ENCODE measurements at regions of chr4 and their contacts with region 1.

Region 1: GRCh38 chr4:3399277-3400194 is 42.2 kb upstream of the HGFAC start:
- DNase-seq: no peak
- H3K4me3 ChIP-seq: no peak overlapping the region
- H3K27ac ChIP-seq: no peak overlapping the region
- H3K4me1 ChIP-seq: no peaks in the 10 kb centered on the region
- H3K27me3 ChIP-seq: no peaks in the 10 kb centered on the region
- CTCF ChIP-seq: no peak
- POLR2A ChIP-seq: no peak

Region 2: GRCh38 chr4:3388471-3389232 is 10.9 kb before region 1 on chr4:
- intact Hi-C with region 1: no loop called
- DNase-seq: no peak
- H3K4me3 ChIP-seq: peak overlapping the region; percentile 21 to 60 (median 35)
- H3K27ac ChIP-seq: peak overlapping the region; percentile 81 to 90
- H3K4me1 ChIP-seq: peaks cover 7 to 9% of the 10 kb centered on the region in 2 donors
- H3K27me3 ChIP-seq: no peaks in the 10 kb centered on the region
- CTCF ChIP-seq: no peak
- POLR2A ChIP-seq: no peak

Region 3: DNA sequence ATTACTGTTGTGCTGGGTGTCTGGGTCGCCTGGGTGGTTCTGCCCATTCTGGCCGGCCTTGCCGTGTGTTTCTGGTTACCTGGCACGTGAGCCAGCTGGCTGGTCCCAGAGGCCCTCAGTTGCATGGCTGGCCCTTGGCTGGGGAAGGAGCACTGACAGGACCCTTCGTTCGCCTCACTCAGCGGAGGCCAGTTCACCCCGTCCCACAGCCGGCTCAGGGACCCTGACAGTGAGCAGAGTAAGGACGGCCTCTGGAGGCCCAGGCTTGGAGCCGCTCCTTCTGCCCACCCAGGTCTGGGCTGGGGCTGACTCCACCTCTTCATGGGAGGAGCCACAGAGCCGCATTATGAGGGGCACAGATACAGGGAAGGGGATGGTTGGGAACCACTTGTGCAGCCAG is 21.9 kb after region 1 on chr4:
- intact Hi-C with region 1: loop called (anchors 1 kb)
- DNase-seq: no peak
- H3K4me3 ChIP-seq: no peak overlapping the region
- H3K27ac ChIP-seq: no peak overlapping the region
- H3K4me1 ChIP-seq: no peaks in the 10 kb centered on the region
- H3K27me3 ChIP-seq: no peaks in the 10 kb centered on the region
- CTCF ChIP-seq: no peak
- POLR2A ChIP-seq: no peak

Measured in breast epithelium (tissue), 4 donors.